GM12878 (cell line): ENCODE measurements at regions of chrX and their contacts with region 1.

Region 1: GRCh38 chrX:115268421-115268820 is 21.1 kb upstream of the LUZP4 start:
- DNase-seq: no peak
- ATAC-seq: peak; percentile 72
- H3K4me3 ChIP-seq: no peak overlapping the region
- H3K27ac ChIP-seq: no peak overlapping the region
- H3K4me1 ChIP-seq: no peaks in the 10 kb centered on the region
- H3K27me3 ChIP-seq: no peaks in the 10 kb centered on the region
- CTCF ChIP-seq: peak; percentile 21 to 36 (median 23); a peak in 2 of 6 replicates
- EP300 ChIP-seq: no peak
- POLR2A ChIP-seq: no peak
- RAD21 ChIP-seq: peak; percentile 15; the same call in 1 of the 2 replicates

Region 2: DNA sequence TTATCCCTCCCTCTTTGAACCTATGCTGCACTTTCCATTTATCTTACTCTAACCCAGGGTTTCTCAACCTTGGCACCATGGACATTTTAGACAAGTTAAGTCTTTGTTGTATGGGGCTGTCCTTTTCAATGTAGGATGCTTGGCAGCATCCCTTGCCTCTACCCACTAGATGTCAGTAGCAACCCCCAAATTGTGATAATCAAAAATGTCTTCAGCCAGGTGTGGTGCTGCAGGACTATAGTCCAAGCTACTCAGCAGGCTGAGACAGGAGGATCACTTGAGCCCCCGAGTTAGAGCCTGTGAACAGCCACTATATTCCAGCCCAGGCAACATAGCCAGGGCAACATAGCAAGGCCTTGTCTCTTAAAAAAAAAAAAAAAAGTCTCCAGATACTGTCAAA is 41.5 kb before region 1 on chrX:
- CTCF ChIA-PET with region 1: interaction called, 4 read pairs
- POLR2A ChIA-PET with region 1: no interaction called
- RAD21 ChIA-PET with region 1: no interaction called
- SMC1A ChIA-PET with region 1: no interaction called
- in situ Hi-C with region 1: no loop called
- intact Hi-C with region 1: loop called (anchors 1 kb)
- DNase-seq: no peak
- ATAC-seq: peak; percentile 94
- H3K4me3 ChIP-seq: no peak overlapping the region
- H3K27ac ChIP-seq: no peak overlapping the region
- H3K4me1 ChIP-seq: no peaks in the 10 kb centered on the region
- H3K27me3 ChIP-seq: no peaks in the 10 kb centered on the region; a peak in 1 of 4 replicates
- CTCF ChIP-seq: peak; percentile 23 to 61 (median 51); a peak in 3 of 6 replicates
- EP300 ChIP-seq: no peak
- POLR2A ChIP-seq: no peak
- RAD21 ChIP-seq: peak; percentile 61; the same call in 1 of the 2 replicates

Region 3: GRCh38 chrX:115297189-115297588 is 28.8 kb after region 1 on chrX:
- CTCF ChIA-PET with region 1: no interaction called
- POLR2A ChIA-PET with region 1: no interaction called
- RAD21 ChIA-PET with region 1: no interaction called
- SMC1A ChIA-PET with region 1: no interaction called
- in situ Hi-C with region 1: no loop called
- intact Hi-C with region 1: no loop called
- DNase-seq: no peak
- ATAC-seq: no peak
- H3K4me3 ChIP-seq: no peak overlapping the region
- H3K27ac ChIP-seq: no peak overlapping the region
- H3K4me1 ChIP-seq: no peaks in the 10 kb centered on the region
- H3K27me3 ChIP-seq: no peaks in the 10 kb centered on the region
- CTCF ChIP-seq: no peak
- EP300 ChIP-seq: no peak
- POLR2A ChIP-seq: no peak
- RAD21 ChIP-seq: no peak

Region 4: DNA sequence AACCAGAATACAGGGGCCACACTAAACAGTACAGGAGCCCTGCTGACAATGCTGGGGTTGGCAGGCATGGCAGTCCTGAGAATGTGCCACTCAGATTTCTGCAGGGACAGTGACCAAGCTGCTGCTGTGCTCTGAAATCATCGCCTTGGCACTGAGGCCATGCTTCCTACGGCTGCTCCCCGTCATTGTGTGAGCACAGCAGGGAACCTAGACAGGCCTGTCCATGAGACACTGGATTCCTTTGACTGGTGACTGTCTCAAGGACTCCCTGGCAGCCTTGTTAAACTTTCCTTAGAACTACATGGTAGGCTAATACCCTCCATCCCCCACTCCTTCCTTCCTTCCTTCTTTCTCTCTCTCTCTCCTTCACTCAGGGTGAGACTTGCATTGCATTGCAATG is 132.5 kb after region 1 on chrX:
- CTCF ChIA-PET with region 1: no interaction called
- POLR2A ChIA-PET with region 1: no interaction called
- RAD21 ChIA-PET with region 1: no interaction called
- SMC1A ChIA-PET with region 1: no interaction called
- in situ Hi-C with region 1: no loop called
- intact Hi-C with region 1: no loop called
- DNase-seq: no peak
- ATAC-seq: no peak
- H3K4me3 ChIP-seq: no peak overlapping the region
- H3K27ac ChIP-seq: no peak overlapping the region
- H3K4me1 ChIP-seq: no peaks in the 10 kb centered on the region
- H3K27me3 ChIP-seq: no peaks in the 10 kb centered on the region; a peak in 1 of 4 replicates
- CTCF ChIP-seq: no peak
- EP300 ChIP-seq: no peak
- POLR2A ChIP-seq: no peak
- RAD21 ChIP-seq: no peak